ENCODE measurements at regions of chr20 and their contacts with region 1.

Region 1: GRCh38 chr20:51624157-51624731 is 81.7 kb upstream of the NFATC2 start:
- DNase-seq: no peak
- ATAC-seq: peak; percentile 44

Region 2: DNA sequence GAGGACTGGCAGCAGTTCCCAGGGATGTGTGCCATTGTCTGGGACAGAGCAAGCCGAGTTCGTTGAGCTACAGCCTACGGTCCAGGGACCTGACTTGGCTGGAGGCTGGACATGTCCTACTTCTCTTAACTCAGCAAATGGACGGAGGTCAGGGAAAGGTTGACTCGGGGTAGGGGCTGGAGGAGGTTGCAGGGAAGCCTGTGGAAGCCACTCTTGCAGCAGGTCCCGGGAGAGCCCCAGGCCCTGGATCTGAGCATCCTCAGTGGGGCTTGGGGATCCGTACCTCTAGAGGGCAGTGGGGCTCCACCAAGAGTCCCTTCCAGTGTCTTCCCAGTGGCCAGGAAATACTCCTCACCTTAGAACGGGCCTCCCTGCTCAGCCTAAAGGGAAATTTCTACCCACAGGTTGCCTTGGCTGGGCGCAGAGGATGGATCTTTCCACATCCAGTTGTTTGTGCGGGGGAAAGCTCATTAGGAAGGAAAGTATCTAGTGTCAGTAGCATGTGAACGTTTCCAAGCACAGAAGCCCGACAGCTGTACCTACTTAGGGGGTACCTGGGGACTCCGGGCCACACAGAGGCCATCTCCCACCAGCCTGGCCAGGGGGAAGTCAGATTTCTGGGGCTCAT is 252.0 kb before region 1 on chr20:
- intact Hi-C with region 1: loop called (anchors 1 kb)
- DNase-seq: no peak
- ATAC-seq: peak; percentile 90

Region 3: GRCh38 chr20:51667002-51667408 is 42.8 kb after region 1 on chr20:
- intact Hi-C with region 1: no loop called
- DNase-seq: no peak
- ATAC-seq: no peak

Region 4: GRCh38 chr20:51678026-51678697 is 53.9 kb after region 1 on chr20:
- intact Hi-C with region 1: no loop called
- DNase-seq: no peak
- ATAC-seq: no peak

Region 5: GRCh38 chr20:53124075-53124551 is 1499.9 kb after region 1 on chr20:
- intact Hi-C with region 1: no loop called
- DNase-seq: peak; percentile 71
- ATAC-seq: peak; percentile 95